PC-9 (cell line): ENCODE measurements at regions of chr5 and their contacts with region 1.

Region 1: DNA sequence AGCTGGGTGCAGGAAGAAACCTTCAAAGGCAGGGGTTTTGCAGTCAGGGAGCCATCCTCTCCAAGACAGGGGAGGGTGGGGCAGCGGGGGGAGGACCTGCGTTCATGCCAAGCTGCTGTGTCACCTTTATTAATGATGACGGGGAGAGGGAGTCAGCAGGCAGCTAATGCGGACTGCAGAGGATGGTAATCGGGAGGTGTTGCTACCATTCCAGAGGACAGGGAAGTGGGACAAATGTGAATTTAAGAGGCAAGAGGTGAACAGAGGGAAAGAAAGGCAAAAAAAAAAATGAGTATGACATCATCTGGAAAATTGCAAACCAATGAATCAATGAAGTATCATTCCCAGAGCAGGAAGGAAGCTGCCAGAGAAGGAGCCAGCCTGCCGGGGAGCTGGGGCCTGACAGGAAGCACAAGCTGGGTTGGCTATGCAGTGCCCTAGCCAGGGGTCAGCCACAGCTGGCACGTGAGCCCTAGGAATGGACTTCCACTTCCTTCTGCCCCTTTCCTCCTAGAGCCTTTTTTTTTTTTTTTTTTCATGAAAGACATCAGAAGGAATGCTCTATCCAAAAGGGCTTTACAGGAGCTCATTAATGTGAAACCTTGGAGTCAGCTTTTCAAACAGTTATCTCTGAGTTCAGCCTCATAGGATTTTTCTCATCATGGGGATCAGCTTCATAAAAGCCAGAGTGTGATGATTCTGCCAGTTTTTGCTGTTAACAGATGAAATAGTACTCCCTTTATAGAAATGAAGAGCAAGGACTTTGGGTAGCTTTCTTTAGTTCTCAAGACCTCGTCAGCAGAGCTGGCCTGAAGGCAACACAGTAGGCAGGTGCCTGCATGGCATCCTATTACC is 9.2 kb downstream of the INSYN2B start:
- DNase-seq: peak; percentile 76 to 98
- H3K4me3 ChIP-seq: no peak overlapping the region
- H3K27ac ChIP-seq: peak overlapping the region; percentile 88
- H3K4me1 ChIP-seq: peaks cover 29% of the 10 kb centered on the region
- H3K27me3 ChIP-seq: no peaks in the 10 kb centered on the region
- CTCF ChIP-seq: no peak

Region 2: DNA sequence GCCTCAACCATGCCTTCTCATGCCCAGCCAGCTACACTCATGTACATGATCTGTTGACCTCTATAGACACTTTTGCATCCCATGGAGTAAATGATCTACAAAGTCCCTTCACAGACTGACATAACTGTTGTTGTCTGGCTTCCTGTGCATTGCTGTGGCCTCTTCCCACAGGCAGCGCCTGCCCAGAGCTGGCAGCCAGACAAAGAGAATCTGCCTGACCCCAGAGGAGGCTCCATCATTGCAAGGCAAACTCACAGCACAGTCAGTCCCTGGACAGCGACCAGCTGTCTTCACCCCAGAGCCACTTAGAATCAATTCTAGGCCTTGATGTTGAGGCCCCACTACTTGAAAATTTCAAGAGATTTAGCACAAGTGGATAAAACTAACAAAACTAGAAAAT is 56.4 kb before region 1 on chr5:
- CTCF ChIA-PET with region 1: no interaction called
- POLR2A ChIA-PET with region 1: no interaction called
- intact Hi-C with region 1: no loop called
- DNase-seq: no peak
- H3K4me3 ChIP-seq: no peak overlapping the region
- H3K27ac ChIP-seq: no peak overlapping the region
- H3K4me1 ChIP-seq: no peaks in the 10 kb centered on the region
- H3K27me3 ChIP-seq: no peaks in the 10 kb centered on the region
- CTCF ChIP-seq: no peak

Region 3: DNA sequence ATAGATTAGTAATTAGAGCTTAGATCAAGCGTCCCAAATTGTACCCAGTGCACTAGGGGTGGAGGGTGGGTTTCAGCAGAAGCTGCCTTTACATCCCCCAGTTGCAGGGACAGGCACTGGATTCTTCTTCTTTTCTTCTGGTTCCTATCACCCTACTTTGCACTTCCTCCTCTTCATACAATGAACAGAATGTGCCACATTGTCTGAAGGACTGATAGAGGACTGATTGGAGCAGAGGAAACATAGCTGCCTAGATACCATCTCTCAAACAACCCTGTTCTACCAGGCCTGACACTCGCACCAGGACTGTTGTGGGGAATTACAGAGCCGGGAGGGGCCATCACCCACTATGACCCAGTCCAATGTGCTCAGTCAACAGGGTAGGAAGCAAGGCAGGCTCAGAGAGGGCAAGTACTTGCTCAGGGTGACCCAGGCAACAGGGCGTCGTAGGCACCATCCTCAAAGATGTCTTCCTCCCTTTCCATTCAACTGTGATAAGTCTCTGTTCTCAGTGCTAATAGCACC is 320.2 kb after region 1 on chr5:
- CTCF ChIA-PET with region 1: interaction called, 12 read pairs
- POLR2A ChIA-PET with region 1: no interaction called
- intact Hi-C with region 1: no loop called
- DNase-seq: no peak
- H3K4me3 ChIP-seq: no peak overlapping the region
- H3K27ac ChIP-seq: no peak overlapping the region
- H3K4me1 ChIP-seq: no peaks in the 10 kb centered on the region
- H3K27me3 ChIP-seq: peaks cover 69% of the 10 kb centered on the region
- CTCF ChIP-seq: no peak

Region 4: GRCh38 chr5:170353011-170353761 is 382.0 kb after region 1 on chr5:
- CTCF ChIA-PET with region 1: no interaction called
- POLR2A ChIA-PET with region 1: interaction called, 14 read pairs
- intact Hi-C with region 1: no loop called
- DNase-seq: no peak
- H3K4me3 ChIP-seq: no peak overlapping the region
- H3K27ac ChIP-seq: no peak overlapping the region
- H3K4me1 ChIP-seq: no peaks in the 10 kb centered on the region
- H3K27me3 ChIP-seq: peaks cover 66% of the 10 kb centered on the region
- CTCF ChIP-seq: no peak

Region 5: GRCh38 chr5:171092194-171092593 is 1121.1 kb after region 1 on chr5:
- CTCF ChIA-PET with region 1: interaction called, 12 read pairs
- POLR2A ChIA-PET with region 1: no interaction called
- intact Hi-C with region 1: no loop called
- DNase-seq: peak in 1 of 2 experiments; percentile 74
- H3K4me3 ChIP-seq: no peak overlapping the region
- H3K27ac ChIP-seq: peak overlapping the region; percentile 36; the same call in 1 of the 2 replicates
- H3K4me1 ChIP-seq: peaks cover 11% of the 10 kb centered on the region
- H3K27me3 ChIP-seq: no peaks in the 10 kb centered on the region
- CTCF ChIP-seq: no peak